ENCODE measurements at regions of chr12 and their contacts with region 1.

Region 1: GRCh38 chr12:109523071-109523470 is 45.6 kb downstream of the UBE3B start:
- DNase-seq: no peak
- ATAC-seq: no peak
- H3K4me3 ChIP-seq: no peak overlapping the region
- H3K27ac ChIP-seq: no peak overlapping the region
- H3K4me1 ChIP-seq: no peaks in the 10 kb centered on the region
- H3K27me3 ChIP-seq: no peaks in the 10 kb centered on the region
- CTCF ChIP-seq: no peak
- POLR2A ChIP-seq: no peak

Region 2: DNA sequence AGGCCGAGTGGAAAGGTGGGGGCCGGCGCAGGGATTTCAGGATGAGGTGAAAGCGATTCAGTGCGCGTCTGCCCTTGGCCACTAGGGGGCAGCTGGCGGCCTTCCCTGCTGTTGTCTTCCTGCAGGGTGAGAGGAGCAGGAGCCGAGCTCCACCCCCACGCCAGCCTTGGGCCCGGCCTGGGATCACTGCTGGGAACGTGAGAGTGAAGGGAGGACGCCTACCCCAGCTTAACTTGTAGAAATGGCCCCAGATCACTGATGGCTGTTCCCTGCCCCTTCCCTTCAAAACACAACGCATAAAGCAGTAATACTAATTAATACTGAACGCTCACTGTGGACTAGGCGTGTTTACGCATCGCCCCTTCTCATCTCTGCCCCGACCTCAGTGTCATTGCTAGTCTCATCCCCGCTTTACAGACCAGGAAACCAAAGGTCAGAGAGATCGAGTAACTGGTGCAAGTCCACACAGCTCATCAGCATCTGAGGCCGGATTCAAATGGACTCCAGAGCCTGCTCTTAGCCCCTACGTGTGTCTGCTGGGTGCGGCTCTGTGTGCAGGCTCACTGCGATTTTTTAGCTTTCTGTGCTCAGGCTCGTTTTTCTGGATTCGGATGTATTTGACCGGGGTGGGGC is 74.8 kb after region 1 on chr12:
- intact Hi-C with region 1: loop called in 1 of 2 experiments (anchors 10 kb)
- DNase-seq: peak; percentile 90 to 91 (median 91)
- ATAC-seq: peak; percentile 94 to 98 (median 96)
- H3K4me3 ChIP-seq: no peak overlapping the region
- H3K27ac ChIP-seq: no peak overlapping the region
- H3K4me1 ChIP-seq: peaks cover 0 to 14% (median 2%) of the 10 kb centered on the region in 4 donors
- H3K27me3 ChIP-seq: no peaks in the 10 kb centered on the region
- CTCF ChIP-seq: peak; percentile 95 to 98 (median 96)
- POLR2A ChIP-seq: no peak